Right ventricle myocardium inferior (tissue), 1 donor: ENCODE measurements at regions of chr17 and their contacts with region 1.

Region 1: GRCh38 chr17:32486111-32486700 is 587 bp upstream of the CDK5R1 start:
- DNase-seq: peak; percentile 91
- ATAC-seq: peak; percentile 84

Region 2: DNA sequence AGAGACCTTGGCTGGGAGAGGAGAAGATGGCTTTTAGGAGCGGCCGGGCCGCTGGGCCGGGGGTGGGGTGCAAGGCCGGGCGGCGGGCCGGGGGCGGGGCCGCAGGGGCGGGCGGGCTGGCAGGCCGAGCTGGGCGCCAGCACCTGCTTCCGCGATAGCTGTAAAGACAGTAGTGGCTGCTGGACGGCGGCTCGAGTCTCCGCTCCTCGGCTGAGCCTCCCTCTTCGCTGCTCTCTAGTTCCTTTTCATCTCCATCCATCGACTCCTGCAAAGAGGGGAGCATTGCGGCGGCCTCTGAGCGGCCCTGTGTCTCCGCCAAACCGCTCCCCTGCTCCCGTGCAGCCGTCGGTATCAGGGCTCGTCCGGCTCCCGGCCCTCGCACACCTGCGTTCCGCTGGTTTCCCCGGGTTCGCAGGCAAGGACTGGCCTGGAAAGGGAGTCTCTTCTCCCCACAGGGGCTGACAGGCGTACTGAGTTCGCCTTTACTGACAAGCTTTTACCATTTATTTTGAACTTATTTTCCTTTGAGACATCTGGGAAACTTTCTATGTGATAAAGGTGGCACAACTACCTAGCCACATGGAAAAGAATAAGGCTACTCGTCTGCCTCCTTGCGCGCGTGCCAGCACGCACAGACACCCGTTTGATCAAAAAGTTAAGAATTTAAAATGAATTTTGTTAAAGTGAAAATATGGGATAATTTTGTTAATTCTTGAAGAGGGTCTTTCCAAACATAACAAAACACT is 144.2 kb before region 1 on chr17 and contains the start of gene C17orf75:
- intact Hi-C with region 1: no loop called
- DNase-seq: peak; percentile 85
- ATAC-seq: peak; percentile 96
- total RNA-seq, gene C17orf75: 15.9 TPM

Region 3: DNA sequence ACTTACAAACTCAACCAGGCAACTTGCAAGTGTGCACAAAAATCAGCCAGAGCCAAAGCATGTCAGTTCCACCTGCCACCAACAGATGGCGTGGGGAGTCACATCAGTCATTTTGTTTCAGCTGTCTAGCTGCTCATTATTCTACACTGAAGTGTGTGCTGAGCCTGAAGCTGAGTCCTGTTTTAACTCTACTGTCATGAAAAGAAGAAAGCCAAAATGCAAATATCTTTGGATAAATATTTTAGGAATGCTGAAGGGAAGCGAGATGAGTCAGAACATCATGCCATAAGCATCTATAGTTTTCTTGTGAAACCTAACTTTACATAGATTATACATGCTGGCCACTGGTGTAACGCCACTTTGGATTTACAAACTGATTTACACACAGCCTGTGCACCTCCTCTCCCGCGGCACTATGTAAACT is 173.2 kb after region 1 on chr17:
- intact Hi-C with region 1: loop called (anchors 5 kb)
- DNase-seq: peak; percentile 67
- ATAC-seq: peak; percentile 74